ENCODE measurements at regions of chr9 and their contacts with region 1.

Region 1: DNA sequence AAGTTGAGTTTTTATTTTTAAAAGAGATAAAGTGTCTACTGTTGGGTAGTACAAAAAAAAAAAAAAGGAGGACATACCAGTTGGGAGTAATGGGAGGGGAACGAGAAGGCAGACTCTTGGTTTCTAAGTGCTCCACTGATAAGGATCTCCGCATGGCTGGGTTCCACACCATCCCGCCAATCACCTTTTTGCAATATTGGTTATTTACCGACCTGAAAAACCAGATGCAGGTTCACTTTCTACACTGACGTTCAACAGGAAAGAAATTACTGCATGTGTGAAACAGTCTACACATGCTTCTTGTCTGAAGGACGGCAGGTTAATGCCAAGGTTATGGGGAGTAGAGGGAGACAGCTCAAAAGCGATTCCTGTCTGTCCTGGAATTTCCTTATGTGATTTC is 75.5 kb downstream of the PTPN3 start:
- DNase-seq: peak; percentile 59
- CTCF ChIP-seq: no peak

Region 2: DNA sequence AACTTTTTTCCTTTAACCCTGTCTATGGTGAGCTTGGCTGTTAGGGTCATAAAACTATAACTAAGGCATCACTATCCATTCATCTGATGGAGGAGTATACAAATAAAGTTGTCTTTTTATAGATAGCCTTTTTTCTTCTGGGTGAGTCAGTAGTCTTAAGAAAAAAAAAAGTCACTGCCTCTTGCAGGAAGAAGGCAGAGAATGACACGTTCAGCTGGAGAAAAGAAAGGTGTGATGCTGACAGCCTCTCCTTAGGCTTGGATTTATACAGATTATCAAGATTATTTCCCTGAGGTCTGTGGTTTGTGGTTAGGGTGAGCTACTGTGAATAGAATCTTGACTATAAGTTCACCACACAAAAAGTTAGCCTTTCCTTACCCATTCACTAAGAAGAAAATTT is 124.7 kb before region 1 on chr9:
- CTCF ChIA-PET with region 1: no interaction called
- POLR2A ChIA-PET with region 1: no interaction called
- DNase-seq: no peak
- CTCF ChIP-seq: no peak

Region 3: DNA sequence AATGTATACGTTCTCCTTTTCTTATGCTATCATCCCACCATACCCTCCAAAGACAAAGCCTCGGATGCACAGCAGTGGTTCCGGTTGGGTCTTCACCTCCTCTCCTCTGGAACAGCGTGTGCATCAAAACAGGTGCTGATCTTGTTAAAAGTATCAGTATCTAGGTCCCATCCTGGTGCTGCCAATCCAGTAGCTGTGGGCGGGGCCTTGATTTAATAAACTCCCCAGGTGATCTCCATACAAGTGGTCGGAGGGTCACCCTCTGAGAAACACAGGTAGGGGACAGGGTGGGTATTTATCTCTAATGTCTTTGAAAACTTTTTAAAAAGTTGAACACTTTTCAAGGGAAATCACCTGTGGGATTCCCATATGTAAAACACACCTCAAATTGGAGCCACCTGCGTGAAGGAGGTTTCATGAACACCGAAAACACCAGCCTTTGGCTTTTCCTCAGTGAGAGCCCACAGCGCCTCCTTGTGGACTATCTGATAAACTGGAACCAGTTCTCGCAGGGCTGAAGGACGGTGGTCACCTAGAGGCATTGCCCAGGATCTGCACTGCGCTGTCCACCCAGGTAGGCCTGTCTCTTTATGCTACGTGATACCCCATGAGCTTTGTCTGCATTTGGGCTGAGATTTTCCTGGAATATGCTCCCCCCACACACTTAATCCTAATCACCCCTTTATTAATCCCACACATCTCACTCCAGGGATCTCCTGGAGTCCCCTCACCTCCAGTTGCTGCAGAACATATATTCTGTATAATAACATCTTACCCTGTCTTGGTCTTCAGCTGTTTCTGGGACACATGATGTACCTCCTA is 21.3 kb before region 1 on chr9:
- CTCF ChIA-PET with region 1: interaction called, 10 read pairs
- POLR2A ChIA-PET with region 1: interaction called, 6 read pairs
- DNase-seq: peak; percentile 70
- CTCF ChIP-seq: peak; percentile 87

Region 4: DNA sequence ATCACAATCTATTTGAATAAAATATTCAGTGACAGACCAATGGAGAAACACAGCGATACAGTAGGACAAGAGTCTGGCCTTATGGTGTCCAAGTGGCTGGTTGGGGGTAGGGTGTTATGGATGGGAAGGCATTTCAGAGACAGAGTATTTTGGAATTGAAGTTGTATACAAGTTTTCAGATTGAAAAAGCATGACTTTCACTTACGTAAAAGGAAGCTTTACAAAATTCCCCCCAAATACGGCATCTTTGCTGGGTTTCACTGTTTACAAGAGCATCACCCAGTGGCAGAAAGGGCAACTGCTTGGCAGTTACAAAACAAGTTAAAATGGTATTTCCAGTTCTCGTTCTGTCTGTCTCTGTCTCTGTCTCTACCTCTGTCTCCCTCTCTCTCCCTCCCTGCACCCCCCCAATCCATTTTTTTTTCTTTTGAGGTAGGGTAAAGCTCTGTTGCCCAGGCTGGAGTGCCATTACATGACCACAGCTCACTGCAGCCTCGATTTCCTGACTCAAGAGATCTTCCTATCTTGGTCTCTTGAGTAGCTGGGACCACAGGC is 10.8 kb before region 1 on chr9:
- CTCF ChIA-PET with region 1: interaction called, 31 read pairs
- POLR2A ChIA-PET with region 1: interaction called, 3 read pairs
- DNase-seq: peak; percentile 61
- CTCF ChIP-seq: peak; percentile 84